CD8-positive, alpha-beta T cell (primary cell): ENCODE measurements at regions of chr13 and their contacts with region 1.

Region 1: GRCh38 chr13:48715977-48716376 is 62.2 kb downstream of the CYSLTR2 start:
- DNase-seq: no peak
- ATAC-seq: no peak
- H3K4me3 ChIP-seq: no peak overlapping the region
- H3K4me3 Mint-ChIP-seq: no peak overlapping the region
- H3K27ac ChIP-seq: no peak overlapping the region
- H3K27ac Mint-ChIP-seq: no peak overlapping the region
- H3K4me1 ChIP-seq: no peaks in the 10 kb centered on the region
- H3K4me1 Mint-ChIP-seq: no peaks in the 10 kb centered on the region
- H3K27me3 ChIP-seq: no peaks in the 10 kb centered on the region
- H3K27me3 Mint-ChIP-seq: no peaks in the 10 kb centered on the region
- CTCF ChIP-seq: no peak

Region 2: DNA sequence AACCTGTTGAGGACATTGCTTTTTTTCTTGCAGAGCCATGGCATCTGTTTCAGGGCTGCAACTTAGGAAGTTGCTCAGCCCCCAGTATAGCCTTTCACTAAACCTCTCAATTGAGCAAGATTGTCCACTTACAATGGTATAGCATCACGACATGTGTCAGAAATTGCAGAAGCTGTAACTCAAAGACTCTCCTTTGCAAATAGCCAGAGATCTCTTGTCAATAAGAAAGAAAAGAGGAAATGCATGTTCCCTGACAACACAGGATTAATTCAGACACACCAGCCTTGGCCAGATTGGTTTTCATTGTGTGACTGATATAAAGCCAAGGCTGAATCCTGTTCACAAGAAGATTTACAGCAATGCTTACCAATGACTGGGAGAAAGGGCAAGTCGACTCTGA is 100.9 kb before region 1 on chr13:
- CTCF ChIA-PET with region 1: no interaction called
- POLR2A ChIA-PET with region 1: no interaction called
- intact Hi-C with region 1: loop called in 1 of 2 experiments (anchors 5 kb)
- DNase-seq: no peak
- ATAC-seq: no peak
- H3K4me3 ChIP-seq: no peak overlapping the region
- H3K4me3 Mint-ChIP-seq: no peak overlapping the region
- H3K27ac ChIP-seq: no peak overlapping the region
- H3K27ac Mint-ChIP-seq: no peak overlapping the region
- H3K4me1 ChIP-seq: no peaks in the 10 kb centered on the region
- H3K4me1 Mint-ChIP-seq: no peaks in the 10 kb centered on the region
- H3K27me3 ChIP-seq: no peaks in the 10 kb centered on the region
- H3K27me3 Mint-ChIP-seq: peaks cover 2% of the 10 kb centered on the region
- CTCF ChIP-seq: no peak

Region 3: DNA sequence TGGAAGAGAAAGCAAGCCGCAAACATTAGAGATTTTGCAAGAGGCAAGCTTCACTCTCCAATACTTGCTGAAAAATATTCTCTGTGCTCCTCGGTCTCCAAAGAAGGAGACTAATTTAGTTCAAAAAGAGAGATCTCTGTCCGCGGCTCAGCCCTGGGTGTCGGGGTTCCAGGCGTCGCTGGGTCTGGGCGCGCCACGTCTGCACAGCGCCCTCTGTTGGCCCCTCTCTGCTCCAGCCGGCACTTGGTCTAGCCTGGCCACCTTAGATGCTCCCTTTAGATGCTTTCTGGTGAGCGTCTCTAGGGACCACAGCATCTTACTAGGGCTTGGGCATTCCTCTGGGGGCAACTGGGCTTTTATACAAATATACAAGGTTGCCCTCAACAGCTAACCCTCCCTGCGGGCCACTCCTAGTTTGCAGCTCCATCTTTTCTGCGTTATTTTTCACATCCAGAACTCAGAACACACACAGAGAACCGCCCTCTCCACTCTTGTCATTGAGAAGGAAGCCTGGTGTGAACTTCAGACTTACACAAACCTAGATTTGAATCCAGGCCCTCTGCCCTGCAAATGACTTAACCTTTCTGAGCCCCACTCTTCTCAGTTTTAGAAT is 16.1 kb after region 1 on chr13:
- CTCF ChIA-PET with region 1: interaction called, 14 read pairs
- POLR2A ChIA-PET with region 1: no interaction called
- intact Hi-C with region 1: no loop called
- DNase-seq: peak; percentile 29 to 72 (median 61)
- ATAC-seq: peak; percentile 77
- H3K4me3 ChIP-seq: peak overlapping the region; percentile 9 to 29
- H3K4me3 Mint-ChIP-seq: peak overlapping the region; percentile 74
- H3K27ac ChIP-seq: no peak overlapping the region
- H3K27ac Mint-ChIP-seq: no peak overlapping the region
- H3K4me1 ChIP-seq: no peaks in the 10 kb centered on the region
- H3K4me1 Mint-ChIP-seq: peaks cover 2% of the 10 kb centered on the region
- H3K27me3 ChIP-seq: no peaks in the 10 kb centered on the region
- H3K27me3 Mint-ChIP-seq: no peaks in the 10 kb centered on the region
- CTCF ChIP-seq: peak; percentile 70